ENCODE measurements at regions of chr4 and their contacts with region 1.

Region 1: DNA sequence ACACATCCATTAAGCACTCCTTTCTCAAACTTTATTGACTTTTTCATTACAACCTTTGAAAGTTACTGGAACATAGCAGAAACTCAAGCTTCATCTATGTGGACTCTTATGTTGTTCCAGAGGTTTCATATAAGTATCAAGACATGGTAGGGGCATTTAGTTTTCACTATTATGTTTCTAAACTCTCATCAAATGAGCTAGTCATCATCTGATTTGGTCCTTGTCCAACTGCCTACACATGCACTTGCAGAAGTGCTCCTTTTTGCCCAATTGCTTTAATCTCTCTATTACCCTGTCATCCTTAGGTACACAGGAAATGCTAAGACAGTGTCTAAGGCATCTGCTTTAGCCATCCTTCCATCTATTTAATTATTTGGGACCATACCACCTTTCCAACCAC is 42.2 kb upstream of the EPGN start:
- DNase-seq: no peak
- H3K4me3 ChIP-seq: no peak overlapping the region
- H3K27ac ChIP-seq: no peak overlapping the region
- H3K4me1 ChIP-seq: no peaks in the 10 kb centered on the region
- H3K27me3 ChIP-seq: no peaks in the 10 kb centered on the region
- CTCF ChIP-seq: no peak
- POLR2A ChIP-seq: no peak

Region 2: DNA sequence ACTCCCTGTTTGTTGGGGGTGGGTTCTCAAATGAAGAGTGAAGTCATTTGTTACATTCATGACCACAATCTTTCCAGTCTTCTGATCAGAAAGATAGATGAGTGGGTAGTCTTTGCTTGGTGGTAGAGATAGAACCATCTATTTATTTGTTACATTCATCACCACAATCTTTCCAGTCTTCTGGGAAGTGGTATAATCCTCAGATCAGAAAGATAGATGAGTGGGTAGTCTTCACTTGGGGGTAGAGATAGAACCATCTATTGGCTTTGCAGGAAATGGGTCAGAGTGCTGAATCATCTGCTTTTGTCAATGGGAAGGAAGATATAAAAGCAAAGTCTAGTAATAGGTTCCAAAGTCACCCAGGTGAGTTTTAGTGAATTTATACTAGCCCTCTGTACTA is 22.0 kb before region 1 on chr4:
- CTCF ChIA-PET with region 1: no interaction called
- POLR2A ChIA-PET with region 1: no interaction called
- dilution Hi-C with region 1: no loop called
- intact Hi-C with region 1: loop called (anchors 1 kb)
- DNase-seq: no peak
- H3K4me3 ChIP-seq: no peak overlapping the region
- H3K27ac ChIP-seq: no peak overlapping the region
- H3K4me1 ChIP-seq: no peaks in the 10 kb centered on the region
- H3K27me3 ChIP-seq: no peaks in the 10 kb centered on the region
- CTCF ChIP-seq: no peak
- POLR2A ChIP-seq: no peak

Measured in endothelial cell of umbilical vein (primary cell).